CD4-positive, alpha-beta memory T cell (primary cell): ENCODE measurements at regions of chr11 and their contacts with region 1.

Region 1: DNA sequence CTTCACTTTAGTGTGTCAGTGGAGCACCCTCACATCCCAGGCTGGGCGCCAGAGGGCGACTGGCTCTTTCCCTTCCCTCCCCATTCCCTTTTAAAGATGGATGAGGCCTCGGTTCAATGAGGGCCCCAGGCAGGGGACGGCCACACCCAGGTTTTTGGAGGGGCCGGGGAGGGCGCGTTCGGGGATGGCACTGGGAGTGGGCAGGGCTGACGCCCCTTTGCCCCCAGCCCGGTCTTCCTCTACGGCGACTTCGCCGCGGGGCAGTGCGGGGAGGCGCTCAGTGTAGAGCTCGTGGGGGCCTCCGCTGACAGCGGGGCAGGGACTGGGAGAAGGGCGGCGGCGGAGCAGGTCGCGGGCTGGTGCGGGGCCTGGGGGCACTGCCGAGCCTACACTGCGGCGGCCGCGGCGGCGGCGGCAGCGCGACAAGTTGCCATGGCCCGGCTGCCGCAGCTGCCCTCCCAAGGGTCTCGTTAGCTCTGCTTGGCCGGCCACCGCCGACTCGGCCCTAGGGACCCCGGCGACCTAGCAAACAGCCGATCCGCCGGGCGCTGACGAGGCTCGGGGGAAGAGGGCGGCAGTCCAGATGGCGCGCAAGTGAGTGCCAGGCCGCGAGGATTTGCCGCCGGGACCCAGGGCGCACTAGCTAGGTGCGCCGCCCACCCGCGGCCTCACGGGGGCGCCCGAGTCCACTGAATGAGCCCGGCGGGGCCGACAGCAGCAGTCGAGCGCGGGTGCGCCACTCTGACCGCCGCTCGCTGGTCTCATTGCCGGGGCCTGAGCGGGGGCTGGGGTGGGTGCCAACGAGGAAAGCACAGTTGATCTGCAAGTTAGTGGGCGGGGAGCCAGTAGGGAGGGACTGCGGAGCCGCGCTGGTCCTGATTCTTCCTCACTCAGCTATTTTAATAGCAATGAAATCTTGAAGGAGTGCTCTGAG is 92.7 kb downstream of the RRM1 start:
- DNase-seq: peak; percentile 65 to 82 (median 77)
- H3K4me3 ChIP-seq: peak overlapping the region in 1 of 2 donors; percentile 46
- H3K4me3 Mint-ChIP-seq: peak overlapping the region; percentile 77 to 83 (median 81)
- H3K27ac ChIP-seq: no peak overlapping the region
- H3K27ac Mint-ChIP-seq: peak overlapping the region in 2 of 7 donors; percentile 57 to 75
- H3K4me1 ChIP-seq: no peaks in the 10 kb centered on the region
- H3K4me1 Mint-ChIP-seq: peaks cover 0 to 3% (median under 1%) of the 10 kb centered on the region in 4 donors
- H3K27me3 ChIP-seq: no peaks in the 10 kb centered on the region
- H3K27me3 Mint-ChIP-seq: peaks cover 0 to 3% of the 10 kb centered on the region in 2 donors

Region 2: DNA sequence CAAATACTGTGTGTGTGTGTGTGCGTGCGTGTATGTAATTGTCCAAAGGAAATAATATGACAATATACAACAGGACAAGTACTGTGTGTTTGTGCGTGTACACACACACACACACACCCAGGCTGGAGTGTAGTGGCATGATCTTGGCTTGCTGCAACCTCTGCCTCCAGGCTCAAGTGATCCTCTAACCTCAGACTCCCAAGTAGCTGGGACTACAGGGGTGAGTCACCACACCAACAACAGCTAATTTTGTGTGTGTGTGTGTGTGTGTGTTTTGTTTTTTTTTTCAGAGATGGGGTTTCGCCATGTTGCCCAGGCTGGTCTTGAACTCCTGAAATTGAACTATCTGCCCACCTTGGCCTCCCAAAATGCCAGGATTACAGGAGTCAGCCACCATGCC is 451.5 kb before region 1 on chr11:
- CTCF ChIA-PET with region 1: no interaction called
- POLR2A ChIA-PET with region 1: no interaction called
- intact Hi-C with region 1: no loop called
- DNase-seq: no peak
- H3K4me3 ChIP-seq: no peak overlapping the region
- H3K4me3 Mint-ChIP-seq: no peak overlapping the region
- H3K27ac ChIP-seq: no peak overlapping the region
- H3K27ac Mint-ChIP-seq: peak overlapping the region in 2 of 7 donors; percentile 2 to 47
- H3K4me1 ChIP-seq: no peaks in the 10 kb centered on the region
- H3K4me1 Mint-ChIP-seq: peaks cover 0 to 5% (median 3%) of the 10 kb centered on the region in 4 donors
- H3K27me3 ChIP-seq: no peaks in the 10 kb centered on the region
- H3K27me3 Mint-ChIP-seq: no peaks in the 10 kb centered on the region

Region 3: GRCh38 chr11:3984896-3985295 is 202.4 kb before region 1 on chr11:
- CTCF ChIA-PET with region 1: no interaction called
- POLR2A ChIA-PET with region 1: no interaction called
- intact Hi-C with region 1: no loop called
- DNase-seq: peak in 2 of 5 donors; percentile 9 to 17
- H3K4me3 ChIP-seq: no peak overlapping the region
- H3K4me3 Mint-ChIP-seq: peak overlapping the region in 1 of 8 donors; percentile 66
- H3K27ac ChIP-seq: no peak overlapping the region
- H3K27ac Mint-ChIP-seq: peak overlapping the region in 5 of 7 donors; percentile 1 to 95 (median 83)
- H3K4me1 ChIP-seq: peaks cover 68% of the 10 kb centered on the region
- H3K4me1 Mint-ChIP-seq: peaks cover 61 to 91% (median 78%) of the 10 kb centered on the region in 4 donors
- H3K27me3 ChIP-seq: no peaks in the 10 kb centered on the region
- H3K27me3 Mint-ChIP-seq: no peaks in the 10 kb centered on the region

Region 4: GRCh38 chr11:4211991-4212390 is 24.7 kb after region 1 on chr11:
- CTCF ChIA-PET with region 1: interaction called, 18 read pairs
- POLR2A ChIA-PET with region 1: no interaction called
- intact Hi-C with region 1: no loop called
- DNase-seq: no peak
- H3K4me3 ChIP-seq: no peak overlapping the region
- H3K4me3 Mint-ChIP-seq: no peak overlapping the region
- H3K27ac ChIP-seq: no peak overlapping the region
- H3K27ac Mint-ChIP-seq: no peak overlapping the region
- H3K4me1 ChIP-seq: no peaks in the 10 kb centered on the region
- H3K4me1 Mint-ChIP-seq: no peaks in the 10 kb centered on the region
- H3K27me3 ChIP-seq: no peaks in the 10 kb centered on the region
- H3K27me3 Mint-ChIP-seq: peaks cover 8 to 22% of the 10 kb centered on the region in 2 donors

Region 5: GRCh38 chr11:4496557-4497275 is 309.4 kb after region 1 on chr11:
- CTCF ChIA-PET with region 1: interaction called, 178 read pairs
- POLR2A ChIA-PET with region 1: no interaction called
- intact Hi-C with region 1: no loop called
- DNase-seq: no peak
- H3K4me3 ChIP-seq: no peak overlapping the region
- H3K4me3 Mint-ChIP-seq: no peak overlapping the region
- H3K27ac ChIP-seq: no peak overlapping the region
- H3K27ac Mint-ChIP-seq: peak overlapping the region in 1 of 7 donors; percentile 17
- H3K4me1 ChIP-seq: no peaks in the 10 kb centered on the region
- H3K4me1 Mint-ChIP-seq: peaks cover 0 to 4% (median 2%) of the 10 kb centered on the region in 4 donors
- H3K27me3 ChIP-seq: no peaks in the 10 kb centered on the region
- H3K27me3 Mint-ChIP-seq: peaks cover 0 to 4% of the 10 kb centered on the region in 2 donors

Region 6: GRCh38 chr11:4546878-4547277 is 359.6 kb after region 1 on chr11:
- CTCF ChIA-PET with region 1: interaction called, 151 read pairs
- POLR2A ChIA-PET with region 1: no interaction called
- intact Hi-C with region 1: no loop called
- DNase-seq: no peak
- H3K4me3 ChIP-seq: no peak overlapping the region
- H3K4me3 Mint-ChIP-seq: no peak overlapping the region
- H3K27ac ChIP-seq: no peak overlapping the region
- H3K27ac Mint-ChIP-seq: no peak overlapping the region
- H3K4me1 ChIP-seq: no peaks in the 10 kb centered on the region
- H3K4me1 Mint-ChIP-seq: no peaks in the 10 kb centered on the region
- H3K27me3 ChIP-seq: no peaks in the 10 kb centered on the region
- H3K27me3 Mint-ChIP-seq: peaks cover 10 to 11% of the 10 kb centered on the region in 2 donors

Region 7: DNA sequence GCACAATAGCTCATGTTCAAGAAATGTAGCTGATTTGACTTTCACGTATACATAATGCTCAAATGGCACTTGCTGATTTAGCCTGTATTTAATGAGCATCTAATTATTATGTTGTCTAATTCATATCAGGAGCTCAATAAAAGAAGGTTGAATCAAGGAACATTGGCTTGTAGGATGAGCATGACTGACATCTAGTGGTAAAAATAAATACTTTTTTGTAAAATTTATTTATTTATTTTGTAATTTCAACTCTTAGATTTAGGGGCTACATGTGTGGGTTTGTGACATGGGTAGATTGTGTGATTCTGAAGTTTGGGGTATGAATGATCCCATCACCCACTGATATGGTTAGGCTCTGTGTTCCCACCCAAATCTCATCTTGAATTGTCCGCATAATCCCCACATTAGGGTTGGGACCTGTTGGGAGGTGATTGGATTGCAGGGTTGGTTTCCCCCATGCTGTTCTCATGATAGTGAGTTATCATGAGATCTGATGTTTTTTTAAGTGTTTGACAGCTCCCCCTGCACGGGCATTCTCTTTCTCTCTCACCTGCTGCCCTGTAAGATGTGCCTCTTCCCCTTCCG is 1704.0 kb after region 1 on chr11:
- CTCF ChIA-PET with region 1: interaction called, 3 read pairs
- POLR2A ChIA-PET with region 1: no interaction called
- intact Hi-C with region 1: loop called (anchors 2 kb)
- DNase-seq: peak in 3 of 5 donors; percentile 1 to 4 (median 2)
- H3K4me3 ChIP-seq: no peak overlapping the region
- H3K4me3 Mint-ChIP-seq: no peak overlapping the region
- H3K27ac ChIP-seq: no peak overlapping the region
- H3K27ac Mint-ChIP-seq: no peak overlapping the region
- H3K4me1 ChIP-seq: no peaks in the 10 kb centered on the region
- H3K4me1 Mint-ChIP-seq: no peaks in the 10 kb centered on the region
- H3K27me3 ChIP-seq: no peaks in the 10 kb centered on the region
- H3K27me3 Mint-ChIP-seq: peaks cover 0 to 10% of the 10 kb centered on the region in 2 donors